Activated CD4-positive, alpha-beta memory T cell treated with anti-CD3 and anti-CD28 coated beads, Interleukin-2, amount 10 ng/mL, durations not matched to agents 7 days and 5 days (primary cell): ENCODE measurements at regions of chr12 and their contacts with region 1.

Region 1: GRCh38 chr12:53379389-53380103 is 430 bp upstream of the SP1 start:
- DNase-seq: peak; percentile 99
- H3K4me3 Mint-ChIP-seq: no peak overlapping the region
- H3K27ac Mint-ChIP-seq: no peak overlapping the region
- H3K4me1 Mint-ChIP-seq: peaks cover 40% of the 10 kb centered on the region
- H3K27me3 Mint-ChIP-seq: no peaks in the 10 kb centered on the region

Region 2: GRCh38 chr12:53344824-53345485 is 34.6 kb before region 1 on chr12:
- CTCF ChIA-PET with region 1: interaction called, 9 read pairs
- POLR2A ChIA-PET with region 1: interaction called, 25 read pairs
- DNase-seq: peak; percentile 70
- H3K4me3 Mint-ChIP-seq: peak overlapping the region; percentile 88
- H3K27ac Mint-ChIP-seq: peak overlapping the region; percentile 26
- H3K4me1 Mint-ChIP-seq: peaks cover 18% of the 10 kb centered on the region
- H3K27me3 Mint-ChIP-seq: peaks cover 15% of the 10 kb centered on the region

Region 3: GRCh38 chr12:53365245-53365904 is 14.2 kb before region 1 on chr12:
- CTCF ChIA-PET with region 1: interaction called, 3 read pairs
- POLR2A ChIA-PET with region 1: interaction called, 10 read pairs
- DNase-seq: no peak
- H3K4me3 Mint-ChIP-seq: no peak overlapping the region
- H3K27ac Mint-ChIP-seq: peak overlapping the region; percentile 35
- H3K4me1 Mint-ChIP-seq: peaks cover 17% of the 10 kb centered on the region
- H3K27me3 Mint-ChIP-seq: no peaks in the 10 kb centered on the region

Region 4: DNA sequence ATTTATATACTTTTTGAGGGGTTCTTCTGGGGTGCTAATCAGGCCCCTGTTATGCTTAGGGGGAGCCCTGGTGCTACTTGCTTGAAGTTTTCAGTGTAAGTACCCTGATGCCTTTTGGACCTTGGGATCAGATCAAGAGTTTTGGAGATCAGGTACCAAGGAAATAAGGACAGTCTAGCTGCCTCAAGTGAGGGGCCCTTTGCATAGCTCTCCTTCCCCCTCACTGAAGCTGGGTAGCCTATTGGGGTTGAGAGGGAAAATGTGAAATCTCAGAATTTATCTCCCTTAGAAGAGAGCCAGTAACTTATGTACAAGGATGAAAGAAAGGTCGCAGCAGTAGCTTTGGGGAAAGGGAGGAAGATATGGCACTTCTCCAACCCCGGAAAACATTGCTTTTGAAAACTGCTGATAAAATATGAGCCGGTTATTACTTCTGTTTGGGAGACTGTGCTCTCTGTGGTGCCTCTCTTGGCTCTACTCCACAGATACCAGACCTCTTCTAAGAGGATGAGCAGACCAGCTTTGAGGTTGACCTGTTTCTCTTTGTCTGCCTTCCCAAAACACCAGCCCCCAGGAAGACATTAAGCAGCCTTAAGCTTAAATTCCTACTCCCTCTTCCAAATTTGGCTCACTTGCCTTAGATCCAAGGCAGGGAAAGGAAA is 35.3 kb after region 1 on chr12:
- CTCF ChIA-PET with region 1: interaction called, 3 read pairs
- POLR2A ChIA-PET with region 1: interaction called, 13 read pairs
- DNase-seq: no peak
- H3K4me3 Mint-ChIP-seq: no peak overlapping the region
- H3K27ac Mint-ChIP-seq: no peak overlapping the region
- H3K4me1 Mint-ChIP-seq: peaks cover 30% of the 10 kb centered on the region
- H3K27me3 Mint-ChIP-seq: peaks cover 4% of the 10 kb centered on the region

Region 5: DNA sequence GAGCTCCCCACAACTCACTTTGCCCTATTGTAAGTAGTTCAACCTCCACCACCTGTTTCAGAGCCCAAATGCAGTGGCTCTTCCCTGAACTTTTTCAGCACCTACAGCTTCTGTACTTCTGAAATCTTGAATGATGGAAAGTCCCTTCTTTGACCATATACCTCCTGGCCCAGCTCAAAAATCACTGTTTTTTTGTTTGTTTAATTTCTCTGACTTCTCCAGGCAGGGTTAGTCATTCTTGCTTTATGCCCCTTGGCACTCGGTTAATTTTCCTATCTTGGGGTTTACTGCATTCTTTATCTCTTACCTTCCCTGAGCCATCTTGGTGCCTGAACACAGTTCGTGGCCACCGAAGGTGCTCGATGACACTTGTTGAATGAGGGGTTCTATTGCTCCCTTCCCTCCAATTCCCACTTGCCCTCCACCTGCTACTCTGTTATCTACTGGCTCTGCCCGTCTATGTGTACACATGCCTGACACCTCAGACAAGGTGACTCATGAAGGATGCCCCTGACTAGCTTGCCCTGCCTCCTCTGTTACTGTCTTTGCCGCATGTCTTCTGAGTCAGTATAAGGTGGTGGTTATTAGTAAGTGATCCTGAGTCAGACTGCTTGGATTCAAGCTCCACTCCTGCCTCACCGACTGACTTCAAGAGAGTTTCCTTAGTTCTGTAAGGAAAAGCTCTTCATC is 48.5 kb after region 1 on chr12:
- CTCF ChIA-PET with region 1: no interaction called
- POLR2A ChIA-PET with region 1: interaction called, 10 read pairs
- DNase-seq: peak; percentile 30
- H3K4me3 Mint-ChIP-seq: no peak overlapping the region
- H3K27ac Mint-ChIP-seq: no peak overlapping the region
- H3K4me1 Mint-ChIP-seq: peaks cover 7% of the 10 kb centered on the region
- H3K27me3 Mint-ChIP-seq: no peaks in the 10 kb centered on the region

Region 6: GRCh38 chr12:53500776-53501614 is 121.4 kb after region 1 on chr12 and contains the start of gene TARBP2:
- CTCF ChIA-PET with region 1: interaction called, 10 read pairs
- POLR2A ChIA-PET with region 1: interaction called, 21 read pairs
- DNase-seq: peak; percentile 96
- H3K4me3 Mint-ChIP-seq: peak within 1 kb of the TSS; percentile 80
- H3K27ac Mint-ChIP-seq: peak within 1 kb of the TSS; percentile 97
- H3K4me1 Mint-ChIP-seq: peaks cover 47% of the 10 kb centered on the region
- H3K27me3 Mint-ChIP-seq: no peaks in the 10 kb centered on the region
- total RNA-seq, gene TARBP2: 24.5 to 28.0 TPM

Region 7: GRCh38 chr12:54140588-54141388 is 761.2 kb after region 1 on chr12:
- CTCF ChIA-PET with region 1: no interaction called
- POLR2A ChIA-PET with region 1: no interaction called
- DNase-seq: no peak
- H3K4me3 Mint-ChIP-seq: no peak overlapping the region
- H3K27ac Mint-ChIP-seq: no peak overlapping the region
- H3K4me1 Mint-ChIP-seq: no peaks in the 10 kb centered on the region
- H3K27me3 Mint-ChIP-seq: peaks cover 44% of the 10 kb centered on the region